ENCODE measurements at regions of chr17 and their contacts with region 1.

Region 1: GRCh38 chr17:20315821-20316220 is 151.5 kb downstream of the LGALS9B start:
- H3K4me3 Mint-ChIP-seq: no peak overlapping the region
- H3K27ac Mint-ChIP-seq: no peak overlapping the region
- H3K4me1 Mint-ChIP-seq: peaks cover 7% of the 10 kb centered on the region
- H3K27me3 Mint-ChIP-seq: peaks cover 8% of the 10 kb centered on the region

Region 2: GRCh38 chr17:19992803-19993713 is 322.8 kb before region 1 on chr17:
- intact Hi-C with region 1: loop called (anchors 10 kb)
- H3K4me3 Mint-ChIP-seq: no peak overlapping the region
- H3K27ac Mint-ChIP-seq: no peak overlapping the region
- H3K4me1 Mint-ChIP-seq: peaks cover 20% of the 10 kb centered on the region
- H3K27me3 Mint-ChIP-seq: peaks cover 13% of the 10 kb centered on the region

Region 3: GRCh38 chr17:20226814-20227482 is 88.9 kb before region 1 on chr17:
- intact Hi-C with region 1: loop called (anchors 1 kb)
- H3K4me3 Mint-ChIP-seq: no peak overlapping the region
- H3K27ac Mint-ChIP-seq: no peak overlapping the region
- H3K4me1 Mint-ChIP-seq: peaks cover 16% of the 10 kb centered on the region
- H3K27me3 Mint-ChIP-seq: no peaks in the 10 kb centered on the region

Region 4: DNA sequence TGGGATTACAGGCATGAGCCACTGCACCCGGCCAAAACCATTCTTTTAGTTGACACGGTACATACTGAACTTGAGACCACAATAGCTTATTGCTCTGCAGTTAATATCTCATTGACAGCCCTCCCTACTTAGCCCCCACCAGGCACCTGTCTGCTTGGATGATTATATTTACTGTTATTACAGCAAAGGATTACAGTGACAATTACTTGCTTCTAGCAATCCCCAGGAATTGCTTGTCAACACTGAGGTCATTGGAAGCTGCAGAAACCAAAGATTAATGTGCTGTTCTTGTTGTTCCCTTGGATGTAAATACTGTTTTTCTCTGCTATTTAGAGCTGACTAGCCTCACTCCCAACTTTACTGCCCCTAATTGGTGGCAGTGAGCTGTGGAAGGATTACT is 59.7 kb before region 1 on chr17:
- intact Hi-C with region 1: no loop called
- H3K4me3 Mint-ChIP-seq: no peak overlapping the region
- H3K27ac Mint-ChIP-seq: no peak overlapping the region
- H3K4me1 Mint-ChIP-seq: peaks cover 10% of the 10 kb centered on the region
- H3K27me3 Mint-ChIP-seq: no peaks in the 10 kb centered on the region

Measured in dendritic cell treated with granulocyte-macrophage colony-stimulating factor and Interleukin-4, amounts not matched to agents 40 ng/mL and 50 ng/mL, for 4 days (primary cell).